Activated CD8-positive, alpha-beta T cell treated with anti-CD3 and anti-CD28 coated beads for 36 hours (primary cell): ENCODE measurements at regions of chr2 and their contacts with region 1.

Region 1: DNA sequence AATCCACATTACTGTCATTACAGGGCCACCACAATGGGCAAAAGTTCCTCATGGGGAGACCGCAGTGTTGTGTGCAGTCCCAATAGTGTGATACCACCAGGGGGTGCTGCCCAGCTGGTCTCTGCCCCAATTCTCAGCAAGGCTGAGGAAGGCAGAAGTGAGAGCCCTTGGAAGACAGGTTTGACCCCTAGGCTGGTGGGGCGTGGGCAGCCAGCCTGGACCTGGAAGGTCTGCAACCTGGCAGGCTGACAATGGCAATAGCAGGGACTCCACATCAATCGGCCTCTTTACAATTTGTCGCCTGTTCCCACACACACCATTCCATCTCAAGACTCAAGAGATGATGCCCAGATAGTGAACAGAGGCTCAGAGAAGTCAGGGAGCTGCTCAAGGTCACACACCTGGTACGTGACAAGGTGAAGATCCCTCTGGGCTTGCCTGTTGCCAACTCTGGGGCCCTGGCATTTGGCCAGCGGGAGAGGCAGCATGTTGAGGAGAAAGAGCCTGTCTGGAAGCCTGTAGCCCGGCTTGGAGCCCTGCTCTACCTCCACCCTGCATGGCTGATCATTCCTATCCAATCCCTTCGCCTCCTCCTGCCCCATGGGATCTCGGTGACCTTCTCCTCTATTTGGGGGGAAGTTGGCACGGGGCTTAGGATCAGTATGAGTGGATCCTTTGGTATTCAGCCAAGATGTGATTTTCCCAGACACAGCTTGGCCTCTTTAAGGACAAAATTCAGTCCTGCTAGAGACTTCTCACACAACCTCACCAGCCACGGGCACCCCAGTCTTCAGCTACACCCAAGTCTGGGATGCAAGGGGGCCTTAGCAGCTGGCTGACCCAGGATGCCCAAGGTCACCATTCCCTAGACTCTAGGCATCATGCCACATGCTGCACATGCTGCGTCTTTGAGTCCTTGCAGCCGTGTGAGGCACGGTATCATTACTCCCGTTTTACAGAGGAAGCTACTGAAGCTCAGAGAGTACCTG is 2.9 kb upstream of the ATOH8 start:
- DNase-seq: peak; percentile 79
- ATAC-seq: peak; percentile 61
- H3K4me3 Mint-ChIP-seq: no peak overlapping the region
- H3K27ac Mint-ChIP-seq: no peak overlapping the region
- H3K4me1 Mint-ChIP-seq: peaks cover 16% of the 10 kb centered on the region
- H3K27me3 Mint-ChIP-seq: peaks cover 39% of the 10 kb centered on the region
- CTCF ChIP-seq: peak; percentile 75

Region 2: GRCh38 chr2:85728883-85729824 is 21.7 kb before region 1 on chr2:
- CTCF ChIA-PET with region 1: interaction called, 32 read pairs
- POLR2A ChIA-PET with region 1: no interaction called
- intact Hi-C with region 1: no loop called
- DNase-seq: peak; percentile 82
- ATAC-seq: peak; percentile 96
- H3K4me3 Mint-ChIP-seq: no peak overlapping the region
- H3K27ac Mint-ChIP-seq: no peak overlapping the region
- H3K4me1 Mint-ChIP-seq: no peaks in the 10 kb centered on the region
- H3K27me3 Mint-ChIP-seq: peaks cover 7% of the 10 kb centered on the region
- CTCF ChIP-seq: peak; percentile 87

Region 3: DNA sequence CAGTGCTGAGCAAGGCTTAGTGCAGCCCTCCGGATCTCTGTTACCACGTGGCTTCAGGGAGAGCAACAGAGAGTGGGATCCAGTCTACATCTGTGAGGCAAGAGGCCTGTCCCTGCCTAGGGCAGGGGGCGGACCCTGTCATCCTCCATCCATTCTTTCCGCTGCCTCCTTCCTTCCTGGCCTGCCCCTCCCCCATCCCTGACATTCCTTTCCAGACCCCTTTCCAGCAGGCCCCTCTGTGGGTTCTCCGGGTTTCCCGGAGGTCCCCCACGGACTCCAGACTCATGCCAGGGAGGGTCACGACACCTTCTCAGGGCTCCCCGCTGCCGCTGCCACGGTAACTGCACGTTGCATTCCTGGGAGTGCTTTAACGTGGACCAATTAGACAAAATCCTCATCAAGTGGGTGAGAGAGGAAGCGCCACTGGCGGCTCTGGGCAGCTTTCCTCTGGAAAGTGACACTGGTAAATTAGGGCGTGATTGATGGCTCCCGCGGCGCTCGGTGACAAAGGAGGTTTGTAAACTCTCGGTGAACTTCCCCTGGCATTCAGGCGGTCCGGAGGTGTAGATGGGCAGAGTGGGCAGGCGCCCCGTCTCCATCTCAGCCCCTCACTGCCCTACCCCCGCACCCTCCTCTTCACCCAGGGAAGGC is 14.3 kb after region 1 on chr2:
- CTCF ChIA-PET with region 1: interaction called, 26 read pairs
- POLR2A ChIA-PET with region 1: no interaction called
- intact Hi-C with region 1: no loop called
- DNase-seq: no peak
- ATAC-seq: no peak
- H3K4me3 Mint-ChIP-seq: no peak overlapping the region
- H3K27ac Mint-ChIP-seq: no peak overlapping the region
- H3K4me1 Mint-ChIP-seq: no peaks in the 10 kb centered on the region
- H3K27me3 Mint-ChIP-seq: peaks cover 27% of the 10 kb centered on the region
- CTCF ChIP-seq: no peak

Region 4: DNA sequence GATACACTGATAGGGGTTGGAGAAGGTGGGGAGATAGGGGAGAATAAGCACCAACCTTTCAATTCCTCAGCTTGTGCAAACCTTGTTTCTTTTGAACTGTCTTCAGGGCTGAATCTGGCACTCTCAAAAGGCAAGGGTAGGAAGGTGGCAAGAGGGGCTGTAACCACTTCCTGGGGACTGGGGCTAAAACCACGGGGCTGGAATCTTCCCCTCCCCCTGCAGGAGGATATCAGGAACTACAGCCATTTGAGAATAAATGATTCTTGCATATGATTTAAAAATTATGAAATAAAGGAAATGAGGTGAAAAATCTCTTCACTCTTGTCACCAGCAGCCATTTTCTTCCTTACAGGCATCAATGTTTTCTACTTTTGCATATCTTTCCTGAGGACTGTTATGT is 53.7 kb after region 1 on chr2:
- CTCF ChIA-PET with region 1: interaction called, 10 read pairs
- POLR2A ChIA-PET with region 1: no interaction called
- intact Hi-C with region 1: no loop called
- DNase-seq: peak; percentile 57
- ATAC-seq: peak; percentile 78
- H3K4me3 Mint-ChIP-seq: no peak overlapping the region
- H3K27ac Mint-ChIP-seq: no peak overlapping the region
- H3K4me1 Mint-ChIP-seq: peaks cover 12% of the 10 kb centered on the region
- H3K27me3 Mint-ChIP-seq: no peaks in the 10 kb centered on the region
- CTCF ChIP-seq: peak; percentile 67